K562 (cell line): ENCODE measurements at regions of chr17 and their contacts with region 1.

Region 1: DNA sequence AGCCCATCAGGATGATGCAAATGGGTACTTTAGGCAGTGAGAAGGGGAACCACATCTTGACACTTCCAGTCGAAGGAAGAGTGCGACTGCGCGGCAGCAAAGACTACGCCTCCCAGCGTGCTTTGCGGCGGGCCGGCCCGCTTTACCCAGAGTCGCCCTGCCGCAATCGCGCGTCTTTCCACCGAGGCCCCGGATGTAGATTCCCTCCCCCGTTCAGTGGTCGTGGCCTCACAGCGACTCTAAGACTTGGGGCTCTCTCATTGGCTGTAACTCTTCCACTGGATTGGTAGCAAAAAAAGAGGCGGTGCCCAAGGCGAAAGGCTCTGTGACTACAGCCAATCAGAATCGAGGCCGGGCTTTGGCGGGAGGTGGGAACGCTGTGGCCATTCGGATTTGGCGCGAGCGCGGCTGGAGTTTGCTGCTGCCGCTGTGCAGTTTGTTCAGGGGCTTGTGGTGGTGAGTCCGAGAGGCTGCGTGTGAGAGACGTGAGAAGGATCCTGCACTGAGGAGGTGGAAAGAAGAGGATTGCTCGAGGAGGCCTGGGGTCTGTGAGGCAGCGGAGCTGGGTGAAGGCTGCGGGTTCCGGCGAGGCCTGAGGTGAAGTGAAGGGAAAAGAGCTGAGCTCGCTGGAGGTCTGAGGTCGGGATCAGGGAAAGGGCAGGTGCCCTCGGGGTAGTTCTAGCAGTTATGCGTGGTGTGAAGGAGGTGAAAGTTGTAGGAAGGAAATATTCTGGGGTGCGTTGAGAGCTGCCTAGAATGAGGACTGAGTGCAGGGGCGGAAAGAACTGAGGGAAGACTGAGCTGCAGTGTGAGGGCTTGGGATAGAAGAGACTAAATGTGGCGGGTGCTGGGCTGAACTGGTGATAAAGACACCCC is at the start of gene CDC6:
- DNase-seq: peak; percentile 98 to 99 (median 99)
- ATAC-seq: peak; percentile 98
- H3K4me3 ChIP-seq: peak within 1 kb of the TSS; percentile 89
- H3K27ac ChIP-seq: peak within 1 kb of the TSS; percentile 95
- H3K4me1 ChIP-seq: peaks cover 0 to 7% of the 10 kb centered on the region in 2 experiments; a peak in 2 of 5 replicates
- H3K27me3 ChIP-seq: no peaks in the 10 kb centered on the region
- CTCF ChIP-seq: no peak
- EP300 ChIP-seq: peak; percentile 31; the same call in 1 of the 2 replicates
- POLR2A ChIP-seq: peak; percentile 99
- RAD21 ChIP-seq: no peak
- polyA plus RNA-seq, gene CDC6: 29.6 to 55.0 TPM

Region 2: DNA sequence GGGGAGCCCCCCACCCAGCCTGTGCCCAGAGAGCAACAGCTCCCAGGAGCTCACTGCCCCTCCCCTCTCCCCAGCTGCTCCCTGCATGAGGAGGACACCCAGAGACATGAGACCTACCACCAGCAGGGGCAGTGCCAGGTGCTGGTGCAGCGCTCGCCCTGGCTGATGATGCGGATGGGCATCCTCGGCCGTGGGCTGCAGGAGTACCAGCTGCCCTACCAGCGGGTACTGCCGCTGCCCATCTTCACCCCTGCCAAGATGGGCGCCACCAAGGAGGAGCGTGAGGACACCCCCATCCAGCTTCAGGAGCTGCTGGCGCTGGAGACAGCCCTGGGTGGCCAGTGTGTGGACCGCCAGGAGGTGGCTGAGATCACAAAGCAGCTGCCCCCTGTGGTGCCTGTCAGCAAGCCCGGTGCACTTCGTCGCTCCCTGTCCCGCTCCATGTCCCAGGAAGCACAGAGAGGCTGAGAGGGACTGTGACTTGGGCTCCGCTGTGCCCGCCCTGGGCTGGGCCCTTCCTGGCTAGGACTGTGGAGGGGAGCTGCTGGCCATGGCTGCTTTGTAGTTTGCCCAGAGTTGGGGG is 622.0 kb before region 1 on chr17:
- CTCF ChIA-PET with region 1: no interaction called
- POLR2A ChIA-PET with region 1: no interaction called
- in situ Hi-C with region 1: no loop called
- intact Hi-C with region 1: no loop called
- DNase-seq: no peak
- ATAC-seq: no peak
- H3K4me3 ChIP-seq: no peak overlapping the region
- H3K27ac ChIP-seq: peak overlapping the region; percentile 28; the same call in 1 of the 3 replicates
- H3K4me1 ChIP-seq: peaks cover 33 to 89% of the 10 kb centered on the region in 2 experiments
- H3K27me3 ChIP-seq: no peaks in the 10 kb centered on the region
- CTCF ChIP-seq: no peak
- EP300 ChIP-seq: no peak
- POLR2A ChIP-seq: no peak
- RAD21 ChIP-seq: no peak

Region 3: GRCh38 chr17:40015005-40015997 is 272.4 kb before region 1 on chr17 and contains the start of gene CSF3:
- CTCF ChIA-PET with region 1: interaction called, 9 read pairs
- POLR2A ChIA-PET with region 1: interaction called, 4 read pairs
- in situ Hi-C with region 1: loop called (anchors 25 kb)
- intact Hi-C with region 1: loop called (anchors 5 kb)
- DNase-seq: no peak
- ATAC-seq: no peak
- H3K4me3 ChIP-seq: no peak within 1 kb of the TSS
- H3K27ac ChIP-seq: no peak within 1 kb of the TSS
- H3K4me1 ChIP-seq: peaks cover 5 to 64% of the 10 kb centered on the region in 2 experiments; a peak in 3 of 5 replicates
- H3K27me3 ChIP-seq: no peaks in the 10 kb centered on the region
- CTCF ChIP-seq: no peak
- EP300 ChIP-seq: no peak
- POLR2A ChIP-seq: no peak
- RAD21 ChIP-seq: no peak
- polyA plus RNA-seq, gene CSF3: not detected

Region 4: GRCh38 chr17:40130352-40131042 is 157.2 kb before region 1 on chr17:
- CTCF ChIA-PET with region 1: no interaction called
- POLR2A ChIA-PET with region 1: no interaction called
- in situ Hi-C with region 1: no loop called
- intact Hi-C with region 1: no loop called
- DNase-seq: no peak
- ATAC-seq: no peak
- H3K4me3 ChIP-seq: no peak overlapping the region
- H3K27ac ChIP-seq: no peak overlapping the region
- H3K4me1 ChIP-seq: no peaks in the 10 kb centered on the region
- H3K27me3 ChIP-seq: no peaks in the 10 kb centered on the region
- CTCF ChIP-seq: no peak
- EP300 ChIP-seq: no peak
- POLR2A ChIP-seq: no peak
- RAD21 ChIP-seq: no peak

Region 5: DNA sequence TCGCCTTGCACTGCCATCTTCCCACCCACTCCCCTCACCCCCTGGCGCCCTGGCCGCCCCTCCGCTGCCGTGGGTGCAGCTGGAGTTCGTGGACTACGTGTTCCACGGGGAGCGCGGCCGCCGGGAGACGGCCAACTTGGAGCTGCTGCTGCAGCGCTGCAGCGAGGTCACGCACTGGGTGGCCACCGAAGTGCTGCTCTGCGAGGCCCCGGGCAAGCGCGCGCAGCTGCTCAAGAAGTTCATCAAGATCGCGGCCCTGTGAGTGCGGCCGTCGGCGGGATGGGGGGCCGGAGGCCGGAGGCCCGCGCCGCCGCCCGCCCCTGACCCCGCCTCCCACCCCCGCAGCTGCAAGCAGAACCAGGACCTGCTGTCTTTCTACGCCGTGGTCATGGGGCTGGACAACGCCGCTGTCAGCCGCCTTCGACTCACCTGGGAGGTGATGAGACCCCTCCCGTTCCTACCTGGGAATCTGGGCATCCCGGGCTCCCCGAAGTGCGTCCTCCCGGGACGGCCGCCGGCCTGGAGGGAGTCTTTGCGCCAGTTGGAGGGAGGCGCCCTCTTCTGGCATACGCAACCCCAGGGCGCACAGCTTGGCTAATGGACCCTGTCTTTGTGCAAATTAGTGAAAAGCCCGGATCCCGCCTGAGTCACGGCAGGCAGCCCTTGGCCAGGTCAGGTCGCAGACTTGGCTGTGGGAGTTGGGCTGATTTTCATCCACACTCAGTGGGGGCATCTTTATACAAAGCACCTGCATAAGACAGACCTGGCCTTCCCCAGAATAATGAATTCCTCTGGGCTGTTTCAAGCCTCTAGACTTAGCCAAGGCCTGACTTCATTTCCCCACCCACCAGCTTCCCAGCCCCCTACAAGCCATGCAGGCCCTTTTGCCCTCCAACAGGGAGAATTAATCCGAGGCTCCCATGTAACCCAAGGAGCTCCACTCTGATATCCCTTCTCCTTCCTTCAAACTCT is 96.2 kb before region 1 on chr17:
- CTCF ChIA-PET with region 1: interaction called, 3 read pairs
- POLR2A ChIA-PET with region 1: interaction called, 3 read pairs
- in situ Hi-C with region 1: loop called (anchors 5 kb)
- intact Hi-C with region 1: no loop called
- DNase-seq: peak; percentile 80 to 86 (median 84)
- ATAC-seq: peak; percentile 96
- H3K4me3 ChIP-seq: peak overlapping the region; percentile 46
- H3K27ac ChIP-seq: no peak overlapping the region
- H3K4me1 ChIP-seq: peaks cover 3 to 26% of the 10 kb centered on the region in 2 experiments; a peak in 3 of 5 replicates
- H3K27me3 ChIP-seq: no peaks in the 10 kb centered on the region
- CTCF ChIP-seq: peak; percentile 85 to 88 (median 87)
- EP300 ChIP-seq: 0 out of 2 replicates have a peak, but pooled peaks have one; percentile 16
- POLR2A ChIP-seq: no peak
- RAD21 ChIP-seq: peak; percentile 42 to 74; a peak in 3 of 4 replicates

Region 6: GRCh38 chr17:40224718-40225550 is 62.8 kb before region 1 on chr17:
- CTCF ChIA-PET with region 1: no interaction called
- POLR2A ChIA-PET with region 1: interaction called, 3 read pairs
- in situ Hi-C with region 1: no loop called
- intact Hi-C with region 1: loop called (anchors 5 kb)
- DNase-seq: peak in 2 of 4 experiments; percentile 11 to 25
- ATAC-seq: peak; percentile 73
- H3K4me3 ChIP-seq: peak overlapping the region; percentile 21
- H3K27ac ChIP-seq: peak overlapping the region; percentile 60
- H3K4me1 ChIP-seq: peaks cover 6 to 11% of the 10 kb centered on the region in 2 experiments; a peak in 3 of 5 replicates
- H3K27me3 ChIP-seq: no peaks in the 10 kb centered on the region
- CTCF ChIP-seq: no peak
- EP300 ChIP-seq: no peak
- POLR2A ChIP-seq: no peak
- RAD21 ChIP-seq: no peak

Region 7: GRCh38 chr17:40309031-40309948 is 21.6 kb after region 1 on chr17 and contains the start of gene RARA:
- CTCF ChIA-PET with region 1: interaction called, 3 read pairs
- POLR2A ChIA-PET with region 1: interaction called, 12 read pairs
- in situ Hi-C with region 1: no loop called
- intact Hi-C with region 1: no loop called
- DNase-seq: peak; percentile 49 to 66 (median 56)
- ATAC-seq: peak; percentile 80
- H3K4me3 ChIP-seq: peak within 1 kb of the TSS; percentile 22; the same call in 1 of the 2 replicates
- H3K27ac ChIP-seq: peak within 1 kb of the TSS; percentile 49; the same call in 2 of the 3 replicates
- H3K4me1 ChIP-seq: peaks cover 35 to 43% of the 10 kb centered on the region in 2 experiments
- H3K27me3 ChIP-seq: no peaks in the 10 kb centered on the region
- CTCF ChIP-seq: no peak
- EP300 ChIP-seq: no peak
- POLR2A ChIP-seq: no peak
- RAD21 ChIP-seq: peak in 1 of 2 experiments; percentile 8; a peak in 1 of 4 replicates
- polyA plus RNA-seq, gene RARA: 0.10 TPM

Region 8: GRCh38 chr17:40371261-40371929 is 83.7 kb after region 1 on chr17:
- CTCF ChIA-PET with region 1: no interaction called
- POLR2A ChIA-PET with region 1: no interaction called
- in situ Hi-C with region 1: no loop called
- intact Hi-C with region 1: no loop called
- DNase-seq: peak; percentile 49 to 70 (median 63)
- ATAC-seq: peak; percentile 94
- H3K4me3 ChIP-seq: no peak overlapping the region
- H3K27ac ChIP-seq: no peak overlapping the region
- H3K4me1 ChIP-seq: peaks cover 8 to 11% of the 10 kb centered on the region in 2 experiments; a peak in 4 of 5 replicates
- H3K27me3 ChIP-seq: no peaks in the 10 kb centered on the region
- CTCF ChIP-seq: no peak
- EP300 ChIP-seq: no peak
- POLR2A ChIP-seq: no peak
- RAD21 ChIP-seq: no peak

Region 9: DNA sequence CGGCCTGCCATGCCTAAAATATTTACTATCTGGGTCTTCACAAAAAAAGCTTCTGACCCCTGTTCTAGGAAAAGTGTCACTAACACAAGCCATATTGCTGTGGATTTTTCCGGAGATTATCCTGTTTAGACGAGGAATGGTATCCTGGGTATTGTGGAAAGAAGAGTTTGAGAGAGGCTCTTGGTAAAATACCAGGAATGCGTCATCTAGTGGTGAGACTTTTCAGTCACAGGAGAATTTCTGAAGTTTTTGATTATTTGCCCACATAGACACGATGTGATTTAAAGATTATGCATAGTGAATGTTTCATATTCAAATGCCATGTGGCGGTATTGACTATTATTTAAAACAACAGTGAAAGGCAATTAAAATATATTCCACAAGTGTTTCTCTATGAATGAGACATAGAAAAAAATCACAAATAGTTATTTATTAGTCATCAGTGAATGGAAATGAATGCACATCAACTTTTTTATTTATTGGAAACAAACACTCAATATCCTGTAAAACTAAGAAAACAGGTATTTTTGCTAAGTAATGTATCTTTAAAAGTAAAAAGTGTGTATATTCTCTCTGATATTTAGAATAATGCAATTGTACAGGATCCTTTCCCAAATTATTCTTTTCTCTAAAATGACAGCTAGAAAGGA is 504.2 kb after region 1 on chr17:
- CTCF ChIA-PET with region 1: no interaction called
- POLR2A ChIA-PET with region 1: no interaction called
- in situ Hi-C with region 1: no loop called
- intact Hi-C with region 1: no loop called
- DNase-seq: peak in 2 of 4 experiments; percentile 14 to 15
- ATAC-seq: no peak
- H3K4me3 ChIP-seq: no peak overlapping the region
- H3K27ac ChIP-seq: no peak overlapping the region
- H3K4me1 ChIP-seq: peaks cover 3% of the 10 kb centered on the region in 2 experiments; a peak in 1 of 5 replicates
- H3K27me3 ChIP-seq: peaks cover 21 to 25% of the 10 kb centered on the region in 2 experiments
- CTCF ChIP-seq: peak; percentile 52 to 73 (median 65)
- EP300 ChIP-seq: no peak
- POLR2A ChIP-seq: no peak
- RAD21 ChIP-seq: peak; percentile 54 to 80